IMR-90 (cell line): ENCODE measurements at regions of chr19 and their contacts with region 1.

Region 1: GRCh38 chr19:41872775-41873647 is 4.1 kb upstream of the CD79A start:
- DNase-seq: peak; percentile 59
- ATAC-seq: peak; percentile 62
- H3K4me3 ChIP-seq: no peak overlapping the region
- H3K27ac ChIP-seq: no peak overlapping the region
- H3K4me1 ChIP-seq: peaks cover 1% of the 10 kb centered on the region; the same call in 1 of the 2 replicates
- H3K27me3 ChIP-seq: peaks cover 9% of the 10 kb centered on the region; the same call in 1 of the 2 replicates
- CTCF ChIP-seq: peak; percentile 55
- POLR2A ChIP-seq: peak; percentile 48; the same call in 1 of the 2 replicates
- RAD21 ChIP-seq: peak; percentile 60

Region 2: GRCh38 chr19:41951686-41952172 is 78.7 kb after region 1 on chr19:
- CTCF ChIA-PET with region 1: no interaction called
- POLR2A ChIA-PET with region 1: no interaction called
- dilution Hi-C with region 1: no loop called
- in situ Hi-C with region 1: no loop called
- intact Hi-C with region 1: loop called (anchors 1 kb)
- DNase-seq: peak; percentile 65
- ATAC-seq: peak; percentile 98
- H3K4me3 ChIP-seq: no peak overlapping the region
- H3K27ac ChIP-seq: no peak overlapping the region
- H3K4me1 ChIP-seq: 0 out of 2 replicates have a peak, but pooled peaks cover 2% of the 10 kb centered on the region
- H3K27me3 ChIP-seq: no peaks in the 10 kb centered on the region
- CTCF ChIP-seq: peak; percentile 83
- POLR2A ChIP-seq: no peak
- RAD21 ChIP-seq: peak; percentile 86

Region 3: GRCh38 chr19:42176990-42177685 is 304.1 kb after region 1 on chr19:
- CTCF ChIA-PET with region 1: no interaction called
- POLR2A ChIA-PET with region 1: no interaction called
- dilution Hi-C with region 1: no loop called
- in situ Hi-C with region 1: no loop called
- intact Hi-C with region 1: no loop called
- DNase-seq: peak; percentile 76
- ATAC-seq: peak; percentile 99
- H3K4me3 ChIP-seq: peak overlapping the region; percentile 64
- H3K27ac ChIP-seq: no peak overlapping the region
- H3K4me1 ChIP-seq: peaks cover 2% of the 10 kb centered on the region; the same call in 1 of the 2 replicates
- H3K27me3 ChIP-seq: peaks cover 80% of the 10 kb centered on the region
- CTCF ChIP-seq: peak; percentile 54
- POLR2A ChIP-seq: no peak
- RAD21 ChIP-seq: peak; percentile 25; the same call in 1 of the 2 replicates